SK-N-SH (cell line): ENCODE measurements at regions of chr7 and their contacts with region 1.

Region 1: GRCh38 chr7:131859147-131859821 is 302.9 kb upstream of the PODXL start:
- DNase-seq: peak; percentile 80
- H3K4me3 ChIP-seq: peak overlapping the region in 1 of 2 experiments; percentile 15; a peak in 1 of 4 replicates
- H3K27ac ChIP-seq: peak overlapping the region in 1 of 2 experiments; percentile 76; a peak in 3 of 4 replicates
- H3K4me1 ChIP-seq: peaks cover 7 to 30% of the 10 kb centered on the region in 2 experiments; a peak in 3 of 4 replicates
- H3K27me3 ChIP-seq: no peaks in the 10 kb centered on the region
- CTCF ChIP-seq: peak; percentile 99
- EP300 ChIP-seq: no peak
- RAD21 ChIP-seq: peak; percentile 86

Region 2: DNA sequence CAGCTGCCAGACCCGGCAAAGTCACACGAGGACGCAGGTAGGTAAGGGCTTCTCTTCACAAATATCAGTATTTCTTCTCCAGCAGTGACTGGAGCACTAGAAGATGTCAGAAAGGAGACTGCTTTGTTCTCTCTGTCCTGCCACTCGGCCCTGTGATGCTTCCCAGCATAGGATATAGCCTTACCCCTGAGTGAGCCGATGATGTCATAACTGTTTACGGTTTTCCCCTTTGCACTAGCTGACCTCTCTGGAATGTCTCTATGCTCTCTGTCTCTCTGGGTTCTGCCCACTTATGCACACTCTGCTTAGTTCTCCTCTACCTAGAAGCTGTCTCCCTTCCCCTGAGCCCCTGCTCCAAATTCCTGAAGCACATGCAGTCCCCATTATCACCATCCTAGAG is 135.4 kb before region 1 on chr7:
- CTCF ChIA-PET with region 1: interaction called, 10 read pairs
- POLR2A ChIA-PET with region 1: no interaction called
- DNase-seq: no peak
- H3K4me3 ChIP-seq: no peak overlapping the region
- H3K27ac ChIP-seq: no peak overlapping the region
- H3K4me1 ChIP-seq: no peaks in the 10 kb centered on the region; a peak in 2 of 4 replicates
- H3K27me3 ChIP-seq: no peaks in the 10 kb centered on the region
- CTCF ChIP-seq: no peak
- EP300 ChIP-seq: no peak
- RAD21 ChIP-seq: no peak

Region 3: DNA sequence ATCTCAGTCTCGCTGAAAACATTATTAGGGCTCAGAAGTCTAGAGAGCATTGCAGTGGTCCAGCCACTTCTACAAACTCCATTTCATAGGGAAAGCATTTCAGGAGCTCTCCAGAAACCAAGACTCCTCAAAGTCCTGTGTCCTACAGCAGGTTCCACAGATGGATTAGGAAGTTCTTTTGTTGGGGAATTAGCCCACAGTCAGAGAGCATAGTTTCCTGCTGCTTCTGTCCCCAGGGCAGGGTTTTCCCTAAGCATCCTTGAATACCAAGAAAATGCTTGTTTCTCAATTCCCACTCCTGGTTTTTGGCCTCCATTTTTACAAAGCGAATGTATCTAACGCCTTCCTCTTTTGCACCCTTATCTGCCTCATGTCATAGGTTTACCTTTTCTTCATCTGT is 67.0 kb before region 1 on chr7:
- CTCF ChIA-PET with region 1: interaction called, 12 read pairs
- POLR2A ChIA-PET with region 1: no interaction called
- DNase-seq: no peak
- H3K4me3 ChIP-seq: no peak overlapping the region
- H3K27ac ChIP-seq: no peak overlapping the region
- H3K4me1 ChIP-seq: no peaks in the 10 kb centered on the region; a peak in 1 of 4 replicates
- H3K27me3 ChIP-seq: no peaks in the 10 kb centered on the region; the same call in 1 of the 2 replicates
- CTCF ChIP-seq: no peak
- EP300 ChIP-seq: no peak
- RAD21 ChIP-seq: no peak

Region 4: GRCh38 chr7:131844369-131844768 is 14.9 kb before region 1 on chr7:
- CTCF ChIA-PET with region 1: interaction called, 48 read pairs
- POLR2A ChIA-PET with region 1: no interaction called
- DNase-seq: no peak
- H3K4me3 ChIP-seq: no peak overlapping the region
- H3K27ac ChIP-seq: no peak overlapping the region
- H3K4me1 ChIP-seq: peaks cover 6% of the 10 kb centered on the region in 2 experiments; a peak in 2 of 4 replicates
- H3K27me3 ChIP-seq: no peaks in the 10 kb centered on the region; the same call in 1 of the 2 replicates
- CTCF ChIP-seq: peak; percentile 13; the same call in 1 of the 2 replicates
- EP300 ChIP-seq: no peak
- RAD21 ChIP-seq: no peak

Region 5: DNA sequence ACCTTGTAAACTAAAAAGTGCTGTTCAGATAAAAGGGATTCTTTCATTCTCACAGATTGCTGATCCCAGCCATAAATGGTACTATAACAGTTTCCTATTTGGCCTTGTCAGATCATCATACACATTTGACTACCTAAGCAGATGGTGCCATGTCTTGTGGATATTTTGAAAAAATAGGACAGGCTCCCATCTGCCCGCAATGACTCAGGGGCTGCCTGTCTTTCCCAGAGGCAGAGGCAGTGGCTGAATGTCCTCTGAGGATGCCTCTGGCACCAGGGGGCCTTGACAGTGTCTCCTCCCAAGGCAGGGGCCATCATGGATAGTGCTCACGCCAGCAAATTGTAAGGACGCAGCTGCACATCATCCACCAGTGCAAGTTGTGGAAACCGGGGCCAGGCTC is 20.1 kb after region 1 on chr7:
- CTCF ChIA-PET with region 1: interaction called, 46 read pairs
- POLR2A ChIA-PET with region 1: no interaction called
- DNase-seq: no peak
- H3K4me3 ChIP-seq: no peak overlapping the region
- H3K27ac ChIP-seq: no peak overlapping the region
- H3K4me1 ChIP-seq: peaks cover 0 to 6% of the 10 kb centered on the region in 2 experiments; a peak in 2 of 4 replicates
- H3K27me3 ChIP-seq: no peaks in the 10 kb centered on the region
- CTCF ChIP-seq: no peak
- EP300 ChIP-seq: no peak
- RAD21 ChIP-seq: no peak

Region 6: GRCh38 chr7:131909151-131909768 is 50.0 kb after region 1 on chr7:
- CTCF ChIA-PET with region 1: interaction called, 36 read pairs
- POLR2A ChIA-PET with region 1: no interaction called
- DNase-seq: peak; percentile 72
- H3K4me3 ChIP-seq: peak overlapping the region in 1 of 2 experiments; percentile 30; a peak in 1 of 4 replicates
- H3K27ac ChIP-seq: no peak overlapping the region
- H3K4me1 ChIP-seq: peaks cover 0 to 6% of the 10 kb centered on the region in 2 experiments; a peak in 3 of 4 replicates
- H3K27me3 ChIP-seq: no peaks in the 10 kb centered on the region
- CTCF ChIP-seq: no peak
- EP300 ChIP-seq: no peak
- RAD21 ChIP-seq: no peak

Region 7: DNA sequence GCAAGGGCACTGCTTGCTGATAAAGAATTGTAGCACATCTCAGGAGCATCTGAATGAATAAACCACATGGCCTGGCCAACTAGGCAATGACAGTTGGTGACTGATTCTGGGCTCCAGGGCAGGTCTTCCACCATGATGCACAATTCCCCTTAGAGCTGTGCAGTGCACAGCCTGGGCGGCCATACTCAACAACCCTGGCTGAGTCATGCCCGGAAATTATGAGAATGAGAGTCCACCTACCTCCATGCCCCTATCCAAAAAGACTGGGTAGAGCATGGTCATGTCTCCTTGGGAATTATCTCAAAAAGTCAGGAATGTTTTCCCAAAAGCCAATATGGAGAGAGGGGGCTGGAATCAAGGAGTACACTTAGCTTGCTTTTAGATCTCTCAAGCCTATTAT is 291.4 kb after region 1 on chr7:
- CTCF ChIA-PET with region 1: no interaction called
- POLR2A ChIA-PET with region 1: no interaction called
- DNase-seq: no peak
- H3K4me3 ChIP-seq: no peak overlapping the region
- H3K27ac ChIP-seq: no peak overlapping the region
- H3K4me1 ChIP-seq: peaks cover 0 to 22% of the 10 kb centered on the region in 2 experiments; a peak in 2 of 4 replicates
- H3K27me3 ChIP-seq: no peaks in the 10 kb centered on the region
- CTCF ChIP-seq: no peak
- EP300 ChIP-seq: no peak
- RAD21 ChIP-seq: no peak